Natural killer cell (primary cell): ENCODE measurements at regions of chr19 and their contacts with region 1.

Region 1: DNA sequence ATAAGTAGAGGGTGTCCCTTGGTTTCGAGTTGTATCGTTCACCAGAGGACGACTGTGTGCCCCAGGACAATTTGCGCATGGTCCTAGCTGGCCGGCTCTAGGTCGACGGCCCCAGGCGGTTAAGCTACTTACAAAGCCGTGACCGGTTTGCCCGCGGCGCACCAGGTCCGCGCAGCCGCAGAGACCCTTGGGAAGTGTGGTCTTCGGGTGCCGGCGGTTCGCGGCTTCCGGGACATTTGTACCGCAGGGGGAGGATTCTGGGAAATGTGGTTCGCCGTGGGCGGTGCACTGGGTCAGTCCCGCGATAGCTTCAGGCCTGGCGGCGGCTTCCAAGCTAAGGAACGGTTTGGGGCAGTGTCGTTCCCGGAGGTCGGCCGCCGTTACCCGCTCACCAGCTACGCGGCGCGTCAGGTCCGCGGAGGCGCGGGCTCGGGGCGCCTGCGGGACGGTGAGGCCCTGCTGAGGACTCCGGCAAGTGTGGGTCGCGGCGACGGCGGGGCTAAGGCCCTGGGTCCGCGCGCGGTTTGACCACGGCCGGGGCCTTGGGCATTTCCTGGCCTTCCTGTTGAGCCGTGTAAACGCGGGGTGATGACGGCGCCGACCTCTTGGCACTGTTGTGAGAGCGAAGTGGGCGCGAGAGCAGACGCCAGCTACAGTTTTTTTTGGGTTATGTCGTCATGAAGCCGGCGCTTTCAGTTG is at the start of gene ZNF302:
- DNase-seq: peak; percentile 93 to 96
- ATAC-seq: peak; percentile 82 to 93 (median 90)
- H3K4me3 ChIP-seq: peak within 1 kb of the TSS; percentile 65
- H3K4me3 Mint-ChIP-seq: peak within 1 kb of the TSS; percentile 98
- H3K27ac ChIP-seq: peak within 1 kb of the TSS; percentile 77
- H3K27ac Mint-ChIP-seq: peak within 1 kb of the TSS; percentile 98 to 99
- H3K4me1 ChIP-seq: peaks cover 21% of the 10 kb centered on the region
- H3K4me1 Mint-ChIP-seq: peaks cover 29% of the 10 kb centered on the region in 2 donors
- H3K27me3 ChIP-seq: no peaks in the 10 kb centered on the region
- H3K27me3 Mint-ChIP-seq: peaks cover 7 to 23% of the 10 kb centered on the region in 2 donors
- CTCF ChIP-seq: no peak
- total RNA-seq, gene ZNF302: 13.8 to 23.6 (median 17.8) TPM

Region 2: GRCh38 chr19:34662919-34663318 is 14.6 kb before region 1 on chr19:
- intact Hi-C with region 1: no loop called
- DNase-seq: peak in 1 of 2 donors; percentile 77
- ATAC-seq: peak; percentile 75 to 88 (median 79)
- H3K4me3 ChIP-seq: no peak overlapping the region
- H3K4me3 Mint-ChIP-seq: no peak overlapping the region
- H3K27ac ChIP-seq: no peak overlapping the region
- H3K27ac Mint-ChIP-seq: peak overlapping the region; percentile 5 to 49
- H3K4me1 ChIP-seq: peaks cover 13% of the 10 kb centered on the region
- H3K4me1 Mint-ChIP-seq: peaks cover 9 to 26% of the 10 kb centered on the region in 2 donors
- H3K27me3 ChIP-seq: no peaks in the 10 kb centered on the region
- H3K27me3 Mint-ChIP-seq: peaks cover 10 to 20% of the 10 kb centered on the region in 2 donors
- CTCF ChIP-seq: peak; percentile 37

Region 3: GRCh38 chr19:34733826-34734600 is 56.5 kb after region 1 on chr19 and contains the start of gene ZNF181:
- intact Hi-C with region 1: loop called (anchors 2 kb)
- DNase-seq: peak; percentile 73 to 90
- ATAC-seq: peak; percentile 82 to 86 (median 83)
- H3K4me3 ChIP-seq: peak within 1 kb of the TSS; percentile 76
- H3K4me3 Mint-ChIP-seq: peak within 1 kb of the TSS; percentile 92
- H3K27ac ChIP-seq: peak within 1 kb of the TSS; percentile 93
- H3K27ac Mint-ChIP-seq: peak within 1 kb of the TSS; percentile 90 to 94
- H3K4me1 ChIP-seq: peaks cover 24% of the 10 kb centered on the region
- H3K4me1 Mint-ChIP-seq: peaks cover 21 to 31% of the 10 kb centered on the region in 2 donors
- H3K27me3 ChIP-seq: no peaks in the 10 kb centered on the region
- H3K27me3 Mint-ChIP-seq: no peaks in the 10 kb centered on the region
- CTCF ChIP-seq: no peak
- total RNA-seq, gene ZNF181: 3.2 to 3.7 (median 3.5) TPM